Activated naive CD4-positive, alpha-beta T cell treated with anti-CD3 and anti-CD28 coated beads, Interleukin-2, amount 10 ng/mL, durations not matched to agents 7 days and 5 days (primary cell): ENCODE measurements at regions of chr2 and their contacts with region 1.

Region 1: GRCh38 chr2:74250189-74250631 is 51.8 kb downstream of the MTHFD2 start:
- DNase-seq: peak; percentile 74
- H3K4me3 Mint-ChIP-seq: no peak overlapping the region
- H3K27ac Mint-ChIP-seq: peak overlapping the region; percentile 60
- H3K4me1 Mint-ChIP-seq: peaks cover 3% of the 10 kb centered on the region
- H3K27me3 Mint-ChIP-seq: peaks cover 4% of the 10 kb centered on the region

Region 2: DNA sequence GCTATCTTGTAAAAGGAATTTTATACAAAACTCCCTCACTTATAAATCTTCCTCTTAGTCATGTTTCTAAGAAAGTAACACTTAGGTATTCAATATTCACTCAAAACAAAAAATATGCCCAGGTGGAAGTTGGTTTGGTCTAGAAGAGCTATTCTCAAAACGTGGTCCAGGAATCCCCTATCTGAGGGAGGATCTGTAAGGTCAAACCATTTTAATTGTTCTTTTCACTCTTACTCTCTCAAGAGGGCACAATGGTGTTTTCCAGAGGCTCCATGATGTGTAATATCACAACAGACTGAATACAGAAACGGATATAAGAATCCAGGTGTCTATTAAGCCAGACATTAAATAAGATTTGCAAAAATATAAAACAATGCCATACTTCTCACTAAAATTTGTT is 81.5 kb before region 1 on chr2:
- CTCF ChIA-PET with region 1: no interaction called
- DNase-seq: no peak
- H3K4me3 Mint-ChIP-seq: no peak overlapping the region
- H3K27ac Mint-ChIP-seq: no peak overlapping the region
- H3K4me1 Mint-ChIP-seq: peaks cover 9% of the 10 kb centered on the region
- H3K27me3 Mint-ChIP-seq: no peaks in the 10 kb centered on the region

Region 3: DNA sequence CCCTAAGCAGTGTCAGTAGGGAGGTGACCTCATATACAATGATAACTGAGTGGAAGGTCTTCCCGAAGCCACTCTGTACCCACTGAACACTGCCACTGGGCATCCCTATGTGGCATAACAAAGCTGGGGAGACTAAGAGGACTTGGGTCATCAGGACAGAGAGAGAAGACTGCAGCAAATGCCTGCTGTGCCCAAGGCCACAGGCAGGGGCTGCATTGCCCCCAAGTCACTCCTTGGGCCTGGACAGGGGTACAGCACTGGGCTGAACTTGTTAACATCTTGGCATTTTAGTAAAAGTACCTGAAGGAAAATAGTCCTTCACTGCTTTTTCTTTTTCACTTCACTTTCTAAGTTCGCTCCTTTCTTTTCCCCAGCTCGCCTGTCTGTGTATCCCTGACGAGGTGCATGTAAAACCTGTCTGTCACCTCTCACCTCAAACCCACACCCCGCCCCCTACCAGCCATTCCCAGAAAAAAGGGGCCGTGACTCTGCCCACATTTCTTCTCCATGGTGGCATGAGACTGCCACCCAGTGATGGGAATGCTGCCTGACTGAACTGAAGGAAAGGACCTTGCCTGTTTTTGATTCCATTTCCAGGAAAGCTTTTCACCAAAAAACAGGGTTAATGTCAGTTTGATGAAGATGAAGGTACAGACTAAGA is 11.1 kb after region 1 on chr2:
- CTCF ChIA-PET with region 1: interaction called, 11 read pairs
- DNase-seq: no peak
- H3K4me3 Mint-ChIP-seq: no peak overlapping the region
- H3K27ac Mint-ChIP-seq: no peak overlapping the region
- H3K4me1 Mint-ChIP-seq: peaks cover 20% of the 10 kb centered on the region
- H3K27me3 Mint-ChIP-seq: peaks cover 4% of the 10 kb centered on the region

Region 4: DNA sequence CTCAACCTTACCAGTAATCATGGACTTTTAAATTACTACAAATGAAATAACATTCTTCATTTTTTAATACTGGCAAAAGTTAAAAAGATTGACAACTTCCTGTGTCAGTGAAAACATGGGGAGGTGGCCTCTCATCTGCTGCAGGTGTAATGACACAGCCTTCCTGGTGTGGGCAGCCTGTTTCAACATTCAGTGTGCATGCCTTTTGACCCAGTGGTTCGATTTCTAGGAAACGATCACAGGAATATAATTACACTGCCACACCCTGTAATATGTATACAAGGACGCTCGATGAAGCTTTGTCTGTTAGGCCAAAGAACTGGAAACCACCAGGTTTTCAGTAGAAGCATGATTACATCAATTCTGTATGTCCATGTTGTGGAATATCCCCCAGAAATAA is 16.9 kb after region 1 on chr2:
- CTCF ChIA-PET with region 1: interaction called, 14 read pairs
- DNase-seq: peak; percentile 83
- H3K4me3 Mint-ChIP-seq: peak overlapping the region; percentile 48
- H3K27ac Mint-ChIP-seq: peak overlapping the region; percentile 97
- H3K4me1 Mint-ChIP-seq: peaks cover 43% of the 10 kb centered on the region
- H3K27me3 Mint-ChIP-seq: no peaks in the 10 kb centered on the region

Region 5: GRCh38 chr2:74391580-74392448 is 141.6 kb after region 1 on chr2:
- CTCF ChIA-PET with region 1: interaction called, 10 read pairs
- DNase-seq: peak; percentile 96
- H3K4me3 Mint-ChIP-seq: peak overlapping the region; percentile 93
- H3K27ac Mint-ChIP-seq: peak overlapping the region; percentile 97
- H3K4me1 Mint-ChIP-seq: peaks cover 5% of the 10 kb centered on the region
- H3K27me3 Mint-ChIP-seq: peaks cover 12% of the 10 kb centered on the region

Region 6: DNA sequence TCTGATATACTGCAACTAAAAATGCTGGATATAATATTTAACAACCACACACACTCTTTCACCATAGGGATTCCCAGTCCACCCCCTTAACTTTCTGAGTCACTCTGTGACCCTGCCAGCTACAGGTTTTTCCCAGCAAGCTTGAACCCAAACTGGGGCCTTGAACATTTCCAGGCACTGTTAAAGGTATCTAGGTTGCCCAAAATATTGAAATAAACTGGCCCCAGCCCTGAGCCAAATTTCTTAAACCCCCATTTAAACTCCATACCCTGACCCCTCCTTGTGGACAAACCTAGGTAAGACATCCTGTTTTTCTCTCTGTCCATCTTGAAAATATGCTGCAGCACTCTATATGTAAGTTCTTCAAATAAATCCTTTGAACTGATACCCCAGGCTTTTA is 149.6 kb after region 1 on chr2:
- CTCF ChIA-PET with region 1: interaction called, 14 read pairs
- DNase-seq: no peak
- H3K4me3 Mint-ChIP-seq: no peak overlapping the region
- H3K27ac Mint-ChIP-seq: no peak overlapping the region
- H3K4me1 Mint-ChIP-seq: no peaks in the 10 kb centered on the region
- H3K27me3 Mint-ChIP-seq: peaks cover 25% of the 10 kb centered on the region